ENCODE measurements at regions of chr3 and their contacts with region 1.

Region 1: DNA sequence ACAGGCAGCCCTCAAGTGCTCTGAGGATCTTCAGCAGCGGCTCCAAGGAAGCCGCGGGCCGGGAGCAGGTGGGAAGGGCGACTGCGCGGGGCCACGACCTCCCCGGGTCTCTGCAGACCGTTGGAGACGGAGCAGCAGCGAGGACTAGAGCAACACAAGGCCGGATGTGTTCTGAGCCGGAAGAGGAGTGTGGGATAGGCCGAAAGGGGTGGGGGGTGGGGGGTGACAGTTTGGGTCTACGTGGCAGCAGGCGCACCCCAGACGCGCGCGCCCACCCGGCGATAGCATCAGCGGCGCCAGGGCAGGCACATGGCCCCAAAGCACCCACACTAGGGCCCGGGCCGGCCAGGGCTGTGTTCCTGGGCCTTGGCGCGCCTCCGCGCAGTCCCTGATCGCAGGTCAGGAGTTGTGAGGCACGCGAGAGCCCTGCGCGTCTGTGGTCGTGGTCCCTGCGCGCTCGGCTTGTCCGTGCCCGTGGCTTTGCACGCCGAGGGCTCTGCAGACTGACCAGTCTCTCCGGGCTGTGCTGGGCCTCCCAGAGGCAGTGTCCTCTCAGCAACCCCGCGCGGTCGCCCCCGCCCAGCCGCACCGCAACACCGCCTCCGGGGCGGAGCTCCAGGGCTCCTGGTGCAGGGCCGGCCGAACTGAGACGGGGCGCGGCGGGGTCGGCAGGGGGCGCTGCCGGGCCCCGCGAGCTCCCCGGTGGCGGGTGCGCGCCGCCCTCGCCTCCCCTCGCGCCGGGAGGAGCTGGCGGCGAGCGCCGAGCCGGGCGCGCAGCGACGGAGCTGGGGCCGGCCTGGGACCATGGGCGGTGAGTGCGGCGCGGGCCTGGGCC is at the start of gene PXYLP1:
- DNase-seq: peak; percentile 74 to 89 (median 88)
- H3K4me3 ChIP-seq: peak within 1 kb of the TSS; percentile 62 to 88 (median 75)
- H3K27ac ChIP-seq: peak within 1 kb of the TSS in 1 of 2 experiments; percentile 70
- H3K4me1 ChIP-seq: peaks cover 4 to 32% (median 26%) of the 10 kb centered on the region in 4 experiments
- H3K27me3 ChIP-seq: peaks cover 0 to 3% (median 0%) of the 10 kb centered on the region in 5 experiments

Region 2: DNA sequence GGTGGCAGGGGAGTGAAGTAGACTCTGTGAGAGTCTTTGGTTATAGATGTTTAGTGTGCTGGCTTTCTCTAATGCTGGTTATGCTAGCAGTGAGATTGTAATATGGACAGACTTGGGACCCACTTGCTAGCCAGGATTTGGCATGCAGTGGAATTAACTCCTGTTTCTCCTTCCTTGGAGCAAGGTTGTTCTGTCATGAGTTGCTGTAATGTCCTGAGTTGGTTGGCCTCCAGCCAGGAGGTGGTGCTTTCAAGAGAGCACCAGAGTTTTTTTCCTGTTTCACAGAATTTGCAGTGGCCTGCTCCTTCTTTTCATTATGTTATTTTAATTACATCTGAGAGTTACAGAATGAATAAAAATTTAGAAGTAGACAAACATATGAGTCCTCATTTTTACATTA is 87.8 kb before region 1 on chr3:
- CTCF ChIA-PET with region 1: no interaction called
- POLR2A ChIA-PET with region 1: no interaction called
- DNase-seq: no peak
- H3K4me3 ChIP-seq: no peak overlapping the region
- H3K27ac ChIP-seq: no peak overlapping the region
- H3K4me1 ChIP-seq: no peaks in the 10 kb centered on the region
- H3K27me3 ChIP-seq: no peaks in the 10 kb centered on the region

Region 3: DNA sequence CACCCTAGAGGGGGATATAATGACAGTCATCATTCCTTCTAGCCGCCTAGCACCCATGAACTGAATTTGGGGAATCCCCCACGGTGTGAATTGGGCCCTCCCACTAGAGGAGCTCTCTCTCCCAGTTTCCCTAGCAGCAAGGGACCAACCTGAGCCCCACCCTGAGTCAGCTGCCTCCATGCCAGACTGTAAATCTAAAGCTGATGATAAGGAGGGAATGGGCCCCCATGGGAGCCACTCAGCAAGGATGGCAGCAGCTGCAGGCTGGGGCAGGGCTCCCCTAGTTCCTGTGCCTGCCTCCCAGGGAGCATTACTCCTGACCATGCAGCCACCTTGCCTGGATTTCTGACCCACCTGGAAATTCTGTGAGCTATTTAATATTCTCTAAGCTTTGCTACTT is 56.6 kb before region 1 on chr3:
- CTCF ChIA-PET with region 1: no interaction called
- POLR2A ChIA-PET with region 1: no interaction called
- DNase-seq: no peak
- H3K4me3 ChIP-seq: no peak overlapping the region
- H3K27ac ChIP-seq: no peak overlapping the region
- H3K4me1 ChIP-seq: no peaks in the 10 kb centered on the region
- H3K27me3 ChIP-seq: no peaks in the 10 kb centered on the region

Region 4: GRCh38 chr3:141243271-141243707 is 12.0 kb after region 1 on chr3:
- CTCF ChIA-PET with region 1: interaction called, 43 read pairs
- POLR2A ChIA-PET with region 1: no interaction called
- DNase-seq: no peak
- H3K4me3 ChIP-seq: no peak overlapping the region
- H3K27ac ChIP-seq: no peak overlapping the region
- H3K4me1 ChIP-seq: peaks cover 0 to 3% (median 0%) of the 10 kb centered on the region in 4 experiments
- H3K27me3 ChIP-seq: no peaks in the 10 kb centered on the region

Region 5: GRCh38 chr3:141249041-141249440 is 17.7 kb after region 1 on chr3:
- CTCF ChIA-PET with region 1: interaction called, 43 read pairs
- POLR2A ChIA-PET with region 1: interaction called, 3 read pairs
- DNase-seq: no peak
- H3K4me3 ChIP-seq: no peak overlapping the region
- H3K27ac ChIP-seq: no peak overlapping the region
- H3K4me1 ChIP-seq: no peaks in the 10 kb centered on the region
- H3K27me3 ChIP-seq: no peaks in the 10 kb centered on the region

Region 6: DNA sequence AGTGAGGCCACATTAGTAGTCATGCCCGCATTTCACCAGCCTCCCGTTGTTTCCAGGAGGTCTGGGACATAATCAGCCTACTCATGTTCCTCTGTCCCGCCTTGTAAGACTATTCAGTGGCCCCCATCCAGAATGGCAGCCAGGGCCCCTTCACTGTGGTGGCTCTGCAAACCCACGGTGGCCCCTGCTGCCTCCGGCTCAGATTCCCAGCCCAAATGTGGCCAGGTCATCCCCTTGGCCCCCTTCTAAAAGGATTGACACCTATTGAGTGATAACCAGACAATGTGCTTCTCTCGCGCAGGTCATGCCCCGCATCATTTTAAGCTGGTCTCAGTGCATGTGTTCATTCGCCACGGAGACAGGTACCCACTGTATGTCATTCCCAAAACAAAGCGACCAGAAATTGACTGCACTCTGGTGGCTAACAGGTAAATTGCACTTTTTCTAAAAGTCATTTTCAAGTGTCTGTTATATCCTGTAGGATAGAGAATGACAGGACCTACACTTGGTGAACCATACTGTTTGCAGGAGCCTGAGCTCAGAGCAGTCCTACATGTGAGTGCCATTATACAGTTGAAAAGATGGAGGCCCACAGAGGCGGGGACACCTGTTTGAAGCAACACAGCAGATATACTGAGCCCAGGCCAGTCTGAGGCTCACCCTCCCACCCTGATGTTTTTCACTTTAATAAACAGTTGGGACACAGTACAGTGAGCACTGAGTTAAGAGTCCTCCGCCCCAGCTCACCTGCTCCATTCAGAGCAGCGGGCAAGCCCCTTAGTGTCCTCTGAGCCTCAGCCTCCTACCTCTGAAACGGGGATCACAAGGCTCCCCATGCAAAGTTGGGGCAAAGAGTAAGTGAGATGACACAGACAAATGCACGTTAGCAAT is 48.0 kb after region 1 on chr3:
- CTCF ChIA-PET with region 1: interaction called, 34 read pairs
- POLR2A ChIA-PET with region 1: no interaction called
- DNase-seq: peak; percentile 37 to 56 (median 53)
- H3K4me3 ChIP-seq: no peak overlapping the region
- H3K27ac ChIP-seq: no peak overlapping the region
- H3K4me1 ChIP-seq: peaks cover 0 to 12% (median 4%) of the 10 kb centered on the region in 4 experiments
- H3K27me3 ChIP-seq: no peaks in the 10 kb centered on the region

Region 7: GRCh38 chr3:141303481-141304223 is 72.3 kb after region 1 on chr3:
- CTCF ChIA-PET with region 1: interaction called, 12 read pairs
- POLR2A ChIA-PET with region 1: no interaction called
- DNase-seq: peak; percentile 83 to 91 (median 87)
- H3K4me3 ChIP-seq: peak overlapping the region in 1 of 7 experiments; percentile 20
- H3K27ac ChIP-seq: no peak overlapping the region
- H3K4me1 ChIP-seq: peaks cover 0 to 5% (median 4%) of the 10 kb centered on the region in 4 experiments
- H3K27me3 ChIP-seq: no peaks in the 10 kb centered on the region